ENCODE measurements at regions of chr15 and their contacts with region 1.

Region 1: GRCh38 chr15:32651229-32651837 is 9.8 kb downstream of the SCG5 start:
- DNase-seq: peak; percentile 54
- H3K4me3 ChIP-seq: no peak overlapping the region
- H3K27ac ChIP-seq: no peak overlapping the region
- H3K4me1 ChIP-seq: peaks cover 8% of the 10 kb centered on the region
- H3K27me3 ChIP-seq: no peaks in the 10 kb centered on the region
- CTCF ChIP-seq: peak; percentile 88 to 93
- POLR2A ChIP-seq: no peak

Region 2: GRCh38 chr15:32664796-32665195 is 13.5 kb after region 1 on chr15:
- CTCF ChIA-PET with region 1: interaction called, 39 read pairs
- POLR2A ChIA-PET with region 1: no interaction called
- dilution Hi-C with region 1: no loop called
- intact Hi-C with region 1: no loop called
- DNase-seq: no peak
- H3K4me3 ChIP-seq: no peak overlapping the region
- H3K27ac ChIP-seq: no peak overlapping the region
- H3K4me1 ChIP-seq: no peaks in the 10 kb centered on the region
- H3K27me3 ChIP-seq: no peaks in the 10 kb centered on the region
- CTCF ChIP-seq: no peak
- POLR2A ChIP-seq: no peak

Region 3: GRCh38 chr15:32683906-32684584 is 32.7 kb after region 1 on chr15:
- CTCF ChIA-PET with region 1: no interaction called
- POLR2A ChIA-PET with region 1: no interaction called
- dilution Hi-C with region 1: no loop called
- intact Hi-C with region 1: no loop called
- DNase-seq: peak; percentile 9
- H3K4me3 ChIP-seq: no peak overlapping the region
- H3K27ac ChIP-seq: no peak overlapping the region
- H3K4me1 ChIP-seq: peaks cover 2% of the 10 kb centered on the region
- H3K27me3 ChIP-seq: no peaks in the 10 kb centered on the region
- CTCF ChIP-seq: no peak
- POLR2A ChIP-seq: no peak

Region 4: DNA sequence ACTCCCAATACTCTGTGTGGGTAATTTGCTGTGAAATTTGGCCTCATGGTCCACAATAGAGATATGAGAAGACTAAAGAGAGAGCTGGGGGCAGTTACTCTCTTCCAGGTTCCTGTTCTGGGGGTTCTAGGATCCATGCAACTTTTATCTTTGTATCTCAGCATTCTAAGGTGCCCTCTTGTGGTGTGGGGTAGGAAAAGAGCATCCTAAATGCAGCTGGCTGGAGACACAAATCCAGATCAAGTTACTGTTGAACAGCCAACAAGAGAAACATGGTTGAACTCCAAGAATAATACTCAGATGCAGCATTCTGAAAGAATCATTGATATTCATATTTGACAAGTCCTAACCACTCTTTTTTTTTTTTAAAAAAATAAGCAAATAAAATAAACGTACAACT is 304.7 kb after region 1 on chr15:
- CTCF ChIA-PET with region 1: interaction called, 29 read pairs
- POLR2A ChIA-PET with region 1: no interaction called
- dilution Hi-C with region 1: no loop called
- intact Hi-C with region 1: no loop called
- DNase-seq: peak; percentile 51
- H3K4me3 ChIP-seq: no peak overlapping the region
- H3K27ac ChIP-seq: no peak overlapping the region
- H3K4me1 ChIP-seq: no peaks in the 10 kb centered on the region
- H3K27me3 ChIP-seq: peaks cover 3 to 6% of the 10 kb centered on the region in 2 experiments
- CTCF ChIP-seq: peak; percentile 43 to 46
- POLR2A ChIP-seq: no peak

Region 5: GRCh38 chr15:32994810-32995424 is 343.6 kb after region 1 on chr15:
- CTCF ChIA-PET with region 1: interaction called, 226 read pairs
- POLR2A ChIA-PET with region 1: no interaction called
- dilution Hi-C with region 1: no loop called
- intact Hi-C with region 1: no loop called
- DNase-seq: peak; percentile 63
- H3K4me3 ChIP-seq: no peak overlapping the region
- H3K27ac ChIP-seq: no peak overlapping the region
- H3K4me1 ChIP-seq: no peaks in the 10 kb centered on the region
- H3K27me3 ChIP-seq: no peaks in the 10 kb centered on the region
- CTCF ChIP-seq: peak; percentile 19 to 25
- POLR2A ChIP-seq: no peak

Region 6: GRCh38 chr15:33476076-33476475 is 824.7 kb after region 1 on chr15:
- CTCF ChIA-PET with region 1: no interaction called
- POLR2A ChIA-PET with region 1: no interaction called
- dilution Hi-C with region 1: no loop called
- intact Hi-C with region 1: no loop called
- DNase-seq: no peak
- H3K4me3 ChIP-seq: no peak overlapping the region
- H3K27ac ChIP-seq: no peak overlapping the region
- H3K4me1 ChIP-seq: no peaks in the 10 kb centered on the region
- H3K27me3 ChIP-seq: no peaks in the 10 kb centered on the region
- CTCF ChIP-seq: no peak
- POLR2A ChIP-seq: no peak

Measured in endothelial cell of umbilical vein (primary cell).